ENCODE measurements at regions of chr22 and their contacts with region 1.

Region 1: DNA sequence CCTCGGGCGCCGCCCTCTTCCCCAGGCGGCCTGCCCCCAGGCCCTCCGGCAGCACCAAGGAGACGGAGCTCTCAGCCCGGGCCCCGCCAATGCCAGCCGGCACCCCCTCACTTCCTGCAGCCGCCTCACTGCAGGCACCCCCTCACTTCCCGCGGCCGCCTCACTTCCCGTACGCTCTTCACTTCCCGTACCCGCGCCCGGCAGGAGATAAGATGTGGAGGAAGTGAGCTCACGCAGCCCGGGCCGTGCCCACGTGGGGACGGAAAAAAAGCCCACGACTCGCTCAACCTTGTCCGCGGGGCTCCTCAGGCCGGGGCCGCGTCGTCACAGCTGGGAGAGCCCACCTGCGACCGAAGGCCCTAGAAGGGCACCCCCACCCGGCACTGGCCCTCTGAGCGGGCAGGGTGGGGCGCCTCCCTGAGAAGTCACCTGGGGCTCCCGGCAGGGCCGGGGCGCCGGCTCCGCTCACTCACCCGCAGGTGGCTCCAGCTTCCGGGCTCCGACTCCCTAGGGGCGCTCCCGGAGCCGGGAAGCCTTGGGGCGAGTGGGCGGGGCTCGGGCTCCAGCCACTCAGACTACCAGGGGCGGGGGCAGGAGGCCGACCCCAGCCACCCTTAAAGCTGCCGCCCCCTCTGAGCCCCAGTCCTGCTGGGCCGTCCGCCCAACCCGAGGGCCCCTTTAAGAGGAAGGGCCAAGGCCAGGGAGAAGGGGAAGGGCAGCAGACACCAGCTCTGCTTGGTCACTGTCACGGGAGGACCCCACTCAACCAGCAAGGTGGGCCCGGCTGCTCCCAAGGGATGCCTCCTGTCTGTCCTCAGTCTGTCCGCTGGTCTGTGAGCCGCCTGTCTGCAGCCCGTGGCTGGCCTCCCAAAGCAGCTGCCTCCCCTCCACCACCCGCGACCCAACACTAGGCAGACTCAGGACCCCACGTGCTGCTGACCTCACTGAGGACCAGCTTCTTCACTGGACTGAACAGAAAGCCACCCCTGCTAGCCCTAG is 31.4 kb downstream of the PISD start:
- DNase-seq: peak; percentile 64 to 91
- H3K4me3 ChIP-seq: peak overlapping the region; percentile 63 to 96
- H3K27ac ChIP-seq: peak overlapping the region; percentile 86 to 91
- H3K4me1 ChIP-seq: peaks cover 8 to 29% of the 10 kb centered on the region in 2 donors
- H3K27me3 ChIP-seq: no peaks in the 10 kb centered on the region
- CTCF ChIP-seq: no peak

Region 2: GRCh38 chr22:31345331-31346254 is 285.0 kb before region 1 on chr22:
- intact Hi-C with region 1: loop called (anchors 5 kb)
- DNase-seq: peak in 1 of 2 donors; percentile 88
- H3K4me3 ChIP-seq: peak overlapping the region; percentile 56 to 93
- H3K27ac ChIP-seq: peak overlapping the region; percentile 71 to 74
- H3K4me1 ChIP-seq: peaks cover 0 to 27% of the 10 kb centered on the region in 2 donors
- H3K27me3 ChIP-seq: no peaks in the 10 kb centered on the region
- CTCF ChIP-seq: peak; percentile 77 to 97 (median 86)

Region 3: GRCh38 chr22:31496007-31496734 is 134.5 kb before region 1 on chr22 and contains the start of gene SFI1:
- intact Hi-C with region 1: loop called (anchors 2 kb)
- DNase-seq: peak; percentile 56 to 92
- H3K4me3 ChIP-seq: peak within 1 kb of the TSS; percentile 63 to 86
- H3K27ac ChIP-seq: peak within 1 kb of the TSS; percentile 45 to 70
- H3K4me1 ChIP-seq: peaks cover 0 to 8% of the 10 kb centered on the region in 2 donors
- H3K27me3 ChIP-seq: no peaks in the 10 kb centered on the region
- CTCF ChIP-seq: peak in 1 of 3 experiments; percentile 37
- total RNA-seq, gene SFI1: 31.0 TPM

Region 4: GRCh38 chr22:31561238-31561887 is 69.3 kb before region 1 on chr22:
- intact Hi-C with region 1: loop called (anchors 1 kb)
- DNase-seq: peak; percentile 24 to 74
- H3K4me3 ChIP-seq: no peak overlapping the region
- H3K27ac ChIP-seq: no peak overlapping the region
- H3K4me1 ChIP-seq: no peaks in the 10 kb centered on the region
- H3K27me3 ChIP-seq: no peaks in the 10 kb centered on the region
- CTCF ChIP-seq: peak; percentile 49 to 75 (median 58)

Region 5: DNA sequence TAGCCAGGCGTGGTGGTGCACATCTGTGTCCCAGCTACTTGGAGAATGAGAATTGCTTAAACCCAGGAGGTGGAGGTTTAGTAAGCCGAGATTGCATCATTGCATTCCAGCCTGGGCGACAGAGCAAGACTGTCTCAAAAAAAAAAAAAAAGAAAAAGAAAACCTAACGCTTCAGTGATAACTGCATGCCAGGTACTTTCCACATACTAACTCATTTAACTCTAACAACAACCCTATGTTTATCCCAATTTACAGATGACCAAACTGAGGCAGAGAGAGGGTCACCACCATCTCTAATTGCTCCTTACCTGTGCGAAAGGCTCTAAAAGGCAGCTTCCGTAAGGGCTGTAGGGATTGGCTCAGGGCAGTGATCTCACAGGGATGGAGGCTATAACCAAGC is 19.8 kb after region 1 on chr22:
- intact Hi-C with region 1: no loop called
- DNase-seq: no peak
- H3K4me3 ChIP-seq: no peak overlapping the region
- H3K27ac ChIP-seq: no peak overlapping the region
- H3K4me1 ChIP-seq: no peaks in the 10 kb centered on the region
- H3K27me3 ChIP-seq: no peaks in the 10 kb centered on the region
- CTCF ChIP-seq: no peak

Region 6: DNA sequence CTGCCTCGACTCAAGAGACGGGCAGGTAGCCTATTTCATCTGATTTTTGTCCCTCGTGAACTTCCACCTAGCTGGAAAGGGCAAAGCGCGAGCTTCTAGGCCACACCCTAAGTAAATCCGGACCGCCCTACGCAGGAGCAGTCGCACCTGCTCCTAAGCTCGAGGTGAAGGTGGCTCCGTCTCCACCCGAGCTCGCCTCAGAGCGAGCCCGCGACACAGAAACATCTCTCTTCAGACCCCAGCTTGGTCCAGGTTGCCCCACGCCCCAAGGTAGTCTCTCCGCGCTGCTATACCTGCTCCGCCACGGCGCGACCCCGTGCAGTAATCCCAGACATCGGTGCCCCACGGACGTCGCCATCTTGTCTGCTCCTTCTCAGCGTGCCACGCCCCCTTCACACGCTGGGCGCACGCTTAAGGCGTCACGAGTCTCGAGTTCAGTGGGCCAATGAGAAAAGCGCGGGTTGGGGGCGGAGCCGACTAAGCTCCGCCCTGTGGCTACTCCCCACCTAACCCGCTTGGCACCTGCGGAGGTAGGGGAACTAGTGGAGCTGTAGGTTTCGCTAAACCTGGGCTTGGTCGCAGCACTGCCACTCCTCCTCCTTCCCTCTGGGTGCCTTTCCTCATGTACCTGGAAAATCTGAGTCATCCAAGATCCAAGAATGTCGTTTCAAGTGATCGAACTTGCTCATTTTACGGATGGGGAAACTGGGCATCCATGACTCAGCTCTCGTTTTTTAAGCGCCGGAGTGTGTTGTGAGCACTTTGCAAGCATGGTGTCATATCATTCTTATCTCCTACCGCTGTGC is 31.4 kb after region 1 on chr22 and contains the start of gene PISD:
- intact Hi-C with region 1: loop called (anchors 1 kb)
- DNase-seq: peak; percentile 92 to 98
- H3K4me3 ChIP-seq: peak within 1 kb of the TSS; percentile 58 to 85
- H3K27ac ChIP-seq: peak within 1 kb of the TSS; percentile 46 to 61
- H3K4me1 ChIP-seq: peaks cover 6% of the 10 kb centered on the region in 2 donors
- H3K27me3 ChIP-seq: no peaks in the 10 kb centered on the region
- CTCF ChIP-seq: no peak
- total RNA-seq, gene PISD: 110 TPM

Region 7: DNA sequence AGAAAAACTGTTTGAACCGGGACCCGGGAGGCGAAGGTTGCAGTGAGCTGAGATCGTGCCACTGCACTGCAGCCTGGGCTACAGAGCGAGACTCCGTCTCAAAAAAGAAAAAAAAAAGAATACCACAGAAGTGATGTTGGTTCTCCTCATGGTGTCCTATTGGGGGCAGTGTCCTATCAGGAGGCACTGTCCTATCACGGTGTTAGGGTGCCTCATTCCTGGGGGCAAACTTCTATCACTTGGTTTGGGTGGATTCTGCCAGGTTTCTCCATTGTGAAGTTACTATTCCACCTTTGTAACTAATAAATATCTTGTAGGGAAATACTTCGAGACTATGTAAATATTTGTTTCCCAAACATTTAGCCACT is 99.7 kb after region 1 on chr22:
- intact Hi-C with region 1: no loop called
- DNase-seq: no peak
- H3K4me3 ChIP-seq: no peak overlapping the region
- H3K27ac ChIP-seq: no peak overlapping the region
- H3K4me1 ChIP-seq: peaks cover 0 to 7% of the 10 kb centered on the region in 2 donors
- H3K27me3 ChIP-seq: no peaks in the 10 kb centered on the region
- CTCF ChIP-seq: no peak

Measured in ascending aorta (tissue), 2 donors.